Heart right ventricle (tissue), 16 donors: ENCODE measurements at regions of chr2 and their contacts with region 1.

Region 1: GRCh38 chr2:12716282-12717190 is at the start of gene TRIB2:
- DNase-seq: peak; percentile 92 to 94
- ATAC-seq: peak; percentile 76 to 94 (median 82)
- H3K4me3 ChIP-seq: peak within 1 kb of the TSS; percentile 73 to 97 (median 84)
- H3K27ac ChIP-seq: peak within 1 kb of the TSS; percentile 97 to 99 (median 99)
- H3K4me1 ChIP-seq: peaks cover 0 to 43% (median 36%) of the 10 kb centered on the region in 9 donors
- H3K27me3 ChIP-seq: peaks cover 0 to 16% (median 0%) of the 10 kb centered on the region in 7 donors
- CTCF ChIP-seq: peak in 4 of 9 donors; percentile 11 to 43 (median 26)
- total RNA-seq, gene TRIB2: 26.7 to 46.6 (median 36.5) TPM

Region 2: GRCh38 chr2:11967946-11968465 is 748.5 kb before region 1 on chr2:
- intact Hi-C with region 1: loop called in 1 of 10 experiments (anchors 10 kb)
- DNase-seq: peak; percentile 59 to 60
- ATAC-seq: peak; percentile 61 to 94 (median 86)
- H3K4me3 ChIP-seq: no peak overlapping the region
- H3K27ac ChIP-seq: no peak overlapping the region
- H3K4me1 ChIP-seq: peaks cover 0 to 20% (median 9%) of the 10 kb centered on the region in 9 donors
- H3K27me3 ChIP-seq: no peaks in the 10 kb centered on the region
- CTCF ChIP-seq: no peak

Region 3: GRCh38 chr2:12320991-12321641 is 395.4 kb before region 1 on chr2:
- intact Hi-C with region 1: loop called in 1 of 10 experiments (anchors 10 kb)
- DNase-seq: peak; percentile 26 to 36
- ATAC-seq: peak; percentile 66 to 86 (median 78)
- H3K4me3 ChIP-seq: no peak overlapping the region
- H3K27ac ChIP-seq: peak overlapping the region in 4 of 10 donors; percentile 3 to 69 (median 49)
- H3K4me1 ChIP-seq: peaks cover 0 to 28% (median 8%) of the 10 kb centered on the region in 9 donors
- H3K27me3 ChIP-seq: no peaks in the 10 kb centered on the region
- CTCF ChIP-seq: peak in 2 of 9 donors; percentile 11 to 16

Region 4: DNA sequence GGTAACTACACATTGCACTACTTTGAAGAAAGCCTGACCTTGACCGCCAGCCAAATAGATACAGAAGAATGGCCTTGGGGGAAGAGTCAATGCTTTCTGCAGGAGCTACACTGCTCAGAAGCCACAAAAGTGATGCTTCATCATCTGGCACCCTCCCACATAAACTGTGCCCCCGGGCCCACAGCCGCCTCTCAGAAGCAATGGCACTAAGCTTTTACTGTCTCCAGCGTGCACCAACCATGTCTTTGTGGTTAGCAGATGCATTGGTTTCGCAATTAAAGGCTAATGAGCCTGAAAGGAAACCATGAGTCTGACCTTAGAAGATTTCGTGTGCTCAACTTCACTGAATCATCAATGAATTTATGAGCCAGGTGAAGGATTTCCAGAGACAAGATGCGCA is 209.2 kb before region 1 on chr2:
- intact Hi-C with region 1: loop called in 1 of 10 experiments (anchors 10 kb)
- DNase-seq: no peak
- ATAC-seq: no peak
- H3K4me3 ChIP-seq: no peak overlapping the region
- H3K27ac ChIP-seq: no peak overlapping the region
- H3K4me1 ChIP-seq: peaks cover 0 to 34% (median 0%) of the 10 kb centered on the region in 9 donors
- H3K27me3 ChIP-seq: no peaks in the 10 kb centered on the region
- CTCF ChIP-seq: no peak

Region 5: GRCh38 chr2:12606472-12607000 is 110.0 kb before region 1 on chr2:
- intact Hi-C with region 1: no loop called
- DNase-seq: no peak
- ATAC-seq: peak in 6 of 8 donors; percentile 42 to 86 (median 66)
- H3K4me3 ChIP-seq: no peak overlapping the region
- H3K27ac ChIP-seq: peak overlapping the region in 2 of 10 donors; percentile 10 to 27
- H3K4me1 ChIP-seq: peaks cover 0 to 16% (median 9%) of the 10 kb centered on the region in 9 donors
- H3K27me3 ChIP-seq: no peaks in the 10 kb centered on the region
- CTCF ChIP-seq: peak in 6 of 9 donors; percentile 9 to 51 (median 25)

Region 6: GRCh38 chr2:12685145-12685544 is 31.4 kb before region 1 on chr2:
- intact Hi-C with region 1: loop called in 1 of 10 experiments (anchors 1 kb)
- DNase-seq: no peak
- ATAC-seq: no peak
- H3K4me3 ChIP-seq: no peak overlapping the region
- H3K27ac ChIP-seq: no peak overlapping the region
- H3K4me1 ChIP-seq: peaks cover 0 to 12% (median 7%) of the 10 kb centered on the region in 9 donors
- H3K27me3 ChIP-seq: peaks cover 0 to 7% (median 0%) of the 10 kb centered on the region in 7 donors
- CTCF ChIP-seq: no peak

Region 7: DNA sequence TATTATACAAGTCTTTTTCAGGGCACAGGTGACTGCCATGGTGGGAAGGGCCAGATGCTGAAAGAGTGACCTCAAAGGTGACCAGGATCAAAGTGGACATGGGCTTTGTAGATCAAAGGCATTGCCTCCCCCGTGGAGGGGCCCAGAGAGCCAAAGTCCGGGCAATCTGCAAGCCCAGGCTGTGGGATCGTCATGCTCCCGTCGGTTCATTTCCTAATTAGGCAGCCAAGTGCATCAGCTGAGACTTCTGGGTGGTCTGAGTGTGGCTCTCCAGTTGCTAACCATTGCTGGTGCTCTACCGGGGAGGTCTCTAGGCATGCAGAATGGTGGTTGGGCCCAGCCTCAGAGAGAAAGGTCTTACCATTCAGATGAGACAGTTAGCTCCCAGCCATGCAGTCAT is 61.8 kb after region 1 on chr2:
- intact Hi-C with region 1: no loop called
- DNase-seq: no peak
- ATAC-seq: peak in 1 of 8 donors; percentile 33
- H3K4me3 ChIP-seq: no peak overlapping the region
- H3K27ac ChIP-seq: no peak overlapping the region
- H3K4me1 ChIP-seq: peaks cover 0 to 13% (median 0%) of the 10 kb centered on the region in 9 donors
- H3K27me3 ChIP-seq: no peaks in the 10 kb centered on the region
- CTCF ChIP-seq: no peak

Region 8: GRCh38 chr2:12824351-12824777 is 107.8 kb after region 1 on chr2:
- intact Hi-C with region 1: loop called in 6 of 10 experiments (anchors 2 to 10 kb)
- DNase-seq: peak; percentile 35 to 78
- ATAC-seq: peak; percentile 65 to 86 (median 76)
- H3K4me3 ChIP-seq: peak overlapping the region in 1 of 10 donors; percentile 3
- H3K27ac ChIP-seq: peak overlapping the region; percentile 55 to 96 (median 90)
- H3K4me1 ChIP-seq: peaks cover 12 to 50% (median 41%) of the 10 kb centered on the region in 9 donors
- H3K27me3 ChIP-seq: no peaks in the 10 kb centered on the region
- CTCF ChIP-seq: no peak

Region 9: GRCh38 chr2:12870672-12871071 is 154.1 kb after region 1 on chr2:
- intact Hi-C with region 1: no loop called
- DNase-seq: no peak
- ATAC-seq: peak in 2 of 8 donors; percentile 50 to 67
- H3K4me3 ChIP-seq: no peak overlapping the region
- H3K27ac ChIP-seq: no peak overlapping the region
- H3K4me1 ChIP-seq: no peaks in the 10 kb centered on the region
- H3K27me3 ChIP-seq: no peaks in the 10 kb centered on the region
- CTCF ChIP-seq: no peak

Region 10: DNA sequence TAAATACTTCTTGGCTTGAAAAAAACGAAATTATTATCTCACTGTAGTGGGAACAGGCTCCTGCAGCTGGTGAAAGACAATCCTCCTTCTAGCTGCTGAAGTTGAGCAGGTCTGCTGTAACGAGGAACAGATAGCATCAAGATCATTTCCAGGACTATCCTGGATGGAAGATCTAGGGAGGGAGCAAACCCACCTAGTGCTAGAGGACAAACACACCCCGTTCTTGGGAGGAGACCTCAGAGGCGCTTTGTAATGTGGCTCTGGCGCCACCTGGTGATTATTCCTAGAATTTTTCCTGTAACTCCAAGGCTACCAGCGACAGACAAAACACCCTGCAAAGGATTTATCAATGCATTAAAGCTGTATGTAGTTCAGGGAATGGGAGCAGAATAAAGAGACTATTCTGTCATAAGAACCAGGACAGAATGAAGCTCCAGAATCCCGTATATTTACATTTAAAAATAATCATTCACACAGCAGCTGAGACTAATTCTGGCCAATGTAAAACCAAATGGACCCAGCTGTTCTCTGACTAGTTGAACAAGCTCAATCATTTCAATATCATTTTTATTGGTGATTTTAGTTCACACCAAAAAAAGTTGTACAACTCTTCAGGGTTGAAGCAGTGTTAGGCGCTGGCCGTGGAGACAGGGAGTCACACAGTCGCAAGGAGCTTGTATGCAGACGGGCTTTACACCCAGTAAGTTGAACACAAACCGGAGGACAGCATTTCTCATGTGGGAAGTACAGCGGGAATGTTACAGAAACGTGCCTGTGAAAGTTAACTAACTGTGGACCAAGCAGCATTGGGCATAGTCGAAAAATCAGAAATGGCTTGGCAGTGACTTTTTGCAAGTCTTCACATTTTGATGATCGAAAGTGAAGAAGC is 290.5 kb after region 1 on chr2:
- intact Hi-C with region 1: loop called in 9 of 10 experiments (anchors 2 to 10 kb)
- DNase-seq: peak; percentile 25 to 79
- ATAC-seq: peak; percentile 91 to 95 (median 92)
- H3K4me3 ChIP-seq: peak overlapping the region in 7 of 10 donors; percentile 4 to 39 (median 34)
- H3K27ac ChIP-seq: peak overlapping the region in 9 of 10 donors; percentile 11 to 66 (median 42)
- H3K4me1 ChIP-seq: peaks cover 2 to 38% (median 21%) of the 10 kb centered on the region in 9 donors
- H3K27me3 ChIP-seq: no peaks in the 10 kb centered on the region
- CTCF ChIP-seq: peak; percentile 77 to 95 (median 90)